ENCODE measurements at regions of chr2 and their contacts with region 1.

Region 1: DNA sequence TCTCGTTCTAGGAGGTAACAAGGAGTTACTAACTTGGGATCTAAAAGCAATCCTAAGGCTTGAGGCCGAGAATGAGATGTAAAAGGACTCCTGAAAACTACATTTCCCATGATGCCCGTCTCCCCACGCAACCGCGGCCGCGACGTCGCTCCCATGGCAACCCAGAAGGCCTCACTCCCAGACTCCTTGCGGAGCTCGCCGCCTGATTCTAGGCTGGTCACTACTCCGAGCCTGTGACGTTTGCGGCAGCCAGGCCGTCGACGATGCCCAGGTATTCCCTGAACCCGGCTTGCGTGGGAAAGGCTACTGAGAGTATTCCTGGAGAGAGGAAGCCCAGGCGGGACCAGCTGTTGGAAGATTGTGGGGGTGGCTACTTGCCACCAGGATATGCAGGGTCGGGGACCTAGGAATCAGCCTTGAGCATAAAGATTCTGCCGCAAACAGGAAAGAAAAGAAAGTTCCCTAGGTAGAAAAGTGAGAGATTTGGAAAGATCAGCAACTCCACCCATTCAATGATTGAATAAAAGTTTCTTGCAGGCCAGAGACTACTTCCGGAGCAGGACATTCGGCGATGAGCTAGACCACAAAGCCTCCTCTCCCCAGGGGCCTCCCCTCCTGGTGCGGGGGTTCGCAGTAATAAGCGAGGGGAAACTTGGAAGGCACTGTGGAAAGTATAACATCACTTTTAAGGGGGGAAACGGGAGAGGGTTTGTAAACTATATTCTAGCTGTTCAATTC is at the start of gene DYNC2LI1:
- DNase-seq: peak; percentile 75 to 93 (median 90)
- H3K4me3 ChIP-seq: peak within 1 kb of the TSS; percentile 50 to 100 (median 82)
- H3K27ac ChIP-seq: peak within 1 kb of the TSS in 51 of 59 donors; percentile 17 to 86 (median 67)
- H3K27me3 ChIP-seq: no peaks in the 10 kb centered on the region
- CTCF ChIP-seq: peak in 24 of 56 donors; percentile 7 to 49 (median 21)
- total RNA-seq, gene DYNC2LI1: 20.6 to 59.5 (median 40.1) TPM

Region 2: DNA sequence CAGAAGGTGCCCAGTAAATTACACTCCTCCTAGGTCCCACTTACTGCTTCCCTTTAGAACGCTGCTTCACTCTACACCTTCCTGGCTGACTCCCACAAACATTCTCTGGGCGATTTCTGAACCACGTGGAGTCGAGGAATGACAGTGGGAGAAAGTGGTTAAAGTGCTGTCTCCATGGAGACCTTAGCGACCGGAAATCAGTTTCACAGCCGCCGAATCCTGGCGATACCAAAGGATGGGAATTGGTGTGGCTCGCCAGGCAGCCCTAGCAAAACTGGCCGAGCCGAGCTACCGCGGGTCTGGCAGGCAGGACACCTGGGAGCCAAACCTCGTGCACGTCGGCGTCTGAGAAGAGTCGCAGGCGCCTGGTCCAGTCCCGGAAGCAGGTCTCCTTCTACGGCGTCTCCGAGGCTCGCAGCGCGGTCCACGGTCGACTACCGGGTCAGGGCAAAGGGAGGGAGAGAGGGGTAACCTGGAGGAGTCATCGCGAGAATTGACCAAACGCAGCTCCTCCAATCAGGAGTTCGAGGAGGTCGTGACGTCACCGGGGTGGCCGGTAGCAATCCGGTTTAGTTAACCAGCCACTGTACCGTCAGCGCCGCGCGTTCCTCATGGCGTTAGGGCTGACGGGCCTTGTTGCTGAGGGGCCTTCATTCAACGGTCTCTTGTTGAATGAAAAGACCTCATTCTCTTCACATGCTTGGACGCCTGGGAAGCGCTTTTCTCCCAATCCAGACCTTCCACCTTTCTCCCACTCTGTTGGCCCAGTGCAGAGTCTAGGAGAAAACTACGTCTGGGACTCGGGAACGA is 178.2 kb before region 1 on chr2 and contains the start of gene THADA:
- intact Hi-C with region 1: loop called in 1 of 2 experiments (anchors 5 kb)
- DNase-seq: peak; percentile 99 to 100 (median 99)
- H3K4me3 ChIP-seq: peak within 1 kb of the TSS; percentile 61 to 99 (median 87)
- H3K27ac ChIP-seq: peak within 1 kb of the TSS; percentile 1 to 96 (median 89)
- H3K27me3 ChIP-seq: no peaks in the 10 kb centered on the region
- CTCF ChIP-seq: peak in 21 of 56 donors; percentile 6 to 49 (median 27)
- total RNA-seq, gene THADA: 15.6 to 41.4 (median 26.0) TPM

Measured in dorsolateral prefrontal cortex (tissue), 120 donors.